K562 (cell line): ENCODE measurements at regions of chr9 and their contacts with region 1.

Region 1: DNA sequence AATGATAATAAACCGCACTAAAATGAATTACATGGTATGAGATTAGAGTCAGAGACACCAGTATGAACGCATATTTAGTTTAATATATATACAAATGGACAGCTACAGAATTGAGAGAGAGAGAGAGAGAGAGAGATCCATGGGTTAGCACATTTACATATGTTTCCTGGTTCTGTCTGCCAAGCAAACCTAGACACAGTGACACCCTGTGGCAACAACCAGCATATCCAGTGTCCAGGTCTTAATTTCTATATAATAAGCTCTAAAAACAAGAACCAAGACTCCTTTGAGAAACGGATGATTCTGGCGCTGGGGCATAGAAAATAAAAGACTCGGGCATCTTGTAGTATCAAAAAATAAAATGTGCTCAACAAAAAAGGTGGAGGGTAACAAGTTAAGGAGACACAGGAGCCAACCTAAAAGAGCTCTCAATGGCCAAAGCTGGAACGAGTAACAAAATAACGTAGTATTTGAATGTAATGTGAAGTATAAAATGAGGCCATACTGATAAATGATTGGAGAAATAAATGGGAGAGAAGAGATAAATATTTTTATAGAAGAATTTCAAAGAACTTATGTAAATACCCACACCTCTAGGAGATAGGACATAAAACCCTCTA is 84.5 kb downstream of the RFX3 start:
- DNase-seq: peak; percentile 6 to 51 (median 21)
- ATAC-seq: peak; percentile 83
- H3K4me3 ChIP-seq: no peak overlapping the region
- H3K27ac ChIP-seq: no peak overlapping the region
- H3K4me1 ChIP-seq: no peaks in the 10 kb centered on the region
- H3K27me3 ChIP-seq: no peaks in the 10 kb centered on the region
- CTCF ChIP-seq: peak; percentile 32 to 56 (median 53); a peak in 5 of 6 replicates
- EP300 ChIP-seq: no peak
- POLR2A ChIP-seq: no peak
- RAD21 ChIP-seq: peak; percentile 49

Region 2: DNA sequence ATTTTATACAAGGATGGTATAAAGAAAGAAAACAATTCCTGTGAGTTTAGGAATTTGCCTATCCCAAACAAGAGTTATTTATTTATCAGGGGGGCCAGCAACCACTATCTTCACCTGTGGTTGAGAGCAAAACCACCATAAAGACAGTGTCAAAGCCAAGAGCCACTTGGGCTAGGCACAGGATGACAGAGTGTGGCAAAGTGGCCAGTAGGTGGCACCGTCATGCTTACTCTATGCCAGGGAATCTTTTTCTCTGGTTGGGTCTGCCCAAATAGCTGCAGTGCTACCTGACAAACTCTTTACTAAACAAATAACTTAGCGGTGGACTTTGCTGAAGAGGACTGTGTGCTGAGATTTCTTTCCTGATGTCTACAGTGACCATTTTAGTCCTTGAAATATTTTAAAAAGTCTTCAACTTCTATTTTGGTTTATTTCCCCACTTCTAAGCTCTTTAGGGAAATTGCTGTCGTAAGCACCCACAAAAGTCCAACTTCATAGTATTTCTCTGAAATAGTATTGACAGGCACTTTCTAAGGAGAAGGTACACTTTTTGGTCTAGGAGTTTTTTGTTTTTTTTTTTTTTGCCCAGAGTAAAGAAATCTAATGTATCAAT is 200.5 kb before region 1 on chr9:
- CTCF ChIA-PET with region 1: no interaction called
- POLR2A ChIA-PET with region 1: no interaction called
- in situ Hi-C with region 1: no loop called
- intact Hi-C with region 1: loop called (anchors 2 kb)
- DNase-seq: peak; percentile 8 to 41 (median 14)
- ATAC-seq: peak; percentile 83
- H3K4me3 ChIP-seq: no peak overlapping the region
- H3K27ac ChIP-seq: no peak overlapping the region
- H3K4me1 ChIP-seq: no peaks in the 10 kb centered on the region
- H3K27me3 ChIP-seq: no peaks in the 10 kb centered on the region
- CTCF ChIP-seq: peak; percentile 44 to 59 (median 54)
- EP300 ChIP-seq: no peak
- POLR2A ChIP-seq: no peak
- RAD21 ChIP-seq: peak; percentile 30 to 49; a peak in 3 of 4 replicates

Region 3: DNA sequence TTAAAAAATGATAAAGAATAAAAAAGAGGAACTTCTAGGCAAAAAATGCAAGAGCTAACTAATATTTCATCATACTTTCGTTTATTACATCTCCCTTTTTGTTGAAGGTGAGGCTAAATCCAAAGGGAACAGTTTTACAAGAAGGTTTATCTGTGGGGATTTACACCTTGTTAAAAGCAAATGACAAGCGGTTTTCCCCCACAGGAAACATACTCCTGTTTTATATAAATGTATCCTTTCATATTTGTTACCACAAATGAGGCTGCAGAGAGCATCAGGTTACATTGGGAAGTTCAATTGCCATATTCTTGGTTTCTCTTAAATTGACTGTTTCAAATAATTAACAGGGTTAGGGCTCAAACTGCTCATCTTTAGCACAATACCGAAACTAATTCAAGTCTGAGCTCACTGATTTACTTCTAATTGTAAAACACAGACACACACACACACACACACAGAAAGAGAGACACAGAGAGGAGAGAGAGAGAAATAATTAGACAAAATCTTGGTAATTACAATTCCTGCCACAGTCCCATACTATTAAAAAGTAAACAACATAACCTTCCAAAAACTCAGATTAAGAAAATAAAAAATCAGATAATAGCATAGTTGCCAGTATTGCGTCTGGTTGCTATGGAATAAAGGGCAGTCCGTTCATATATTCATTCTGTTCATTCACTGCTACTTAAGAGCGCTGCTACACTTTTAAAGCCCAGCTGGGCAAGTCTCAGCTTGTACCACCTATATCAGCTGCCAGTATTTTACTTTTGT is 67.4 kb after region 1 on chr9:
- CTCF ChIA-PET with region 1: no interaction called
- POLR2A ChIA-PET with region 1: no interaction called
- in situ Hi-C with region 1: no loop called
- intact Hi-C with region 1: no loop called
- DNase-seq: no peak
- ATAC-seq: peak; percentile 69
- H3K4me3 ChIP-seq: peak overlapping the region; percentile 21; the same call in 1 of the 2 replicates
- H3K27ac ChIP-seq: peak overlapping the region; percentile 90
- H3K4me1 ChIP-seq: peaks cover 7 to 11% of the 10 kb centered on the region in 2 experiments; a peak in 4 of 5 replicates
- H3K27me3 ChIP-seq: no peaks in the 10 kb centered on the region
- CTCF ChIP-seq: no peak
- EP300 ChIP-seq: no peak
- POLR2A ChIP-seq: no peak
- RAD21 ChIP-seq: no peak